CD8-positive, alpha-beta memory T cell (primary cell): ENCODE measurements at regions of chr7 and their contacts with region 1.

Region 1: DNA sequence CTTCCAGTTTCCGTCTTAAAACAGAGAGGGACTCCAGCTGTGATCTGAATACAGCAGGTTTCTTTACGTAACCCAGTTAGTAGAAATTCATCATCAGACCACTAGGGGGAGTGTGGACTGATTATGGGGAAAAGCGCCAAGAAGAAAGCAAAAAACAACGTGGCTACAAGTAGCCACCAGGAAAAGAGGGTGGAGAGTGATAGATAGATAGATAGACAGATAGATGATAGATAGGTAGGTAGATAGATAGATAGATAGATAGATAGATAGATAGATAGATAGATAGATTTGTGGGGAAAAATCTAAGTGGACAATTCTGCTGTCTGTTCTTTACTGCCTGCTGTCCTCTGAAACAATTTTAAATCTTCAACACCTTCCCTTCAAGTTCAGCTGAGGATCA is 12.7 kb upstream of the AKR1B10 start:
- DNase-seq: peak in 2 of 5 donors; percentile 32 to 54
- H3K4me3 ChIP-seq: no peak overlapping the region
- H3K4me3 Mint-ChIP-seq: no peak overlapping the region
- H3K27ac ChIP-seq: no peak overlapping the region
- H3K27ac Mint-ChIP-seq: peak overlapping the region in 1 of 8 donors; percentile 61
- H3K4me1 ChIP-seq: no peaks in the 10 kb centered on the region
- H3K4me1 Mint-ChIP-seq: peaks cover 1 to 5% (median 4%) of the 10 kb centered on the region in 3 donors
- H3K27me3 ChIP-seq: no peaks in the 10 kb centered on the region
- H3K27me3 Mint-ChIP-seq: peaks cover 10 to 28% of the 10 kb centered on the region in 2 donors

Region 2: GRCh38 chr7:134547397-134548054 is 32.9 kb after region 1 on chr7:
- CTCF ChIA-PET with region 1: interaction called, 11 read pairs
- POLR2A ChIA-PET with region 1: no interaction called
- DNase-seq: peak; percentile 34 to 73 (median 44)
- H3K4me3 ChIP-seq: no peak overlapping the region
- H3K4me3 Mint-ChIP-seq: peak overlapping the region in 2 of 7 donors; percentile 24 to 40
- H3K27ac ChIP-seq: no peak overlapping the region
- H3K27ac Mint-ChIP-seq: no peak overlapping the region
- H3K4me1 ChIP-seq: no peaks in the 10 kb centered on the region
- H3K4me1 Mint-ChIP-seq: peaks cover 0 to 3% (median 0%) of the 10 kb centered on the region in 3 donors
- H3K27me3 ChIP-seq: no peaks in the 10 kb centered on the region
- H3K27me3 Mint-ChIP-seq: peaks cover 24 to 26% of the 10 kb centered on the region in 2 donors